Cardiac septum (tissue), 1 donor: ENCODE measurements at regions of chr3 and their contacts with region 1.

Region 1: GRCh38 chr3:194070634-194071409 is 65.1 kb upstream of the HES1 start:
- DNase-seq: peak; percentile 93

Region 2: DNA sequence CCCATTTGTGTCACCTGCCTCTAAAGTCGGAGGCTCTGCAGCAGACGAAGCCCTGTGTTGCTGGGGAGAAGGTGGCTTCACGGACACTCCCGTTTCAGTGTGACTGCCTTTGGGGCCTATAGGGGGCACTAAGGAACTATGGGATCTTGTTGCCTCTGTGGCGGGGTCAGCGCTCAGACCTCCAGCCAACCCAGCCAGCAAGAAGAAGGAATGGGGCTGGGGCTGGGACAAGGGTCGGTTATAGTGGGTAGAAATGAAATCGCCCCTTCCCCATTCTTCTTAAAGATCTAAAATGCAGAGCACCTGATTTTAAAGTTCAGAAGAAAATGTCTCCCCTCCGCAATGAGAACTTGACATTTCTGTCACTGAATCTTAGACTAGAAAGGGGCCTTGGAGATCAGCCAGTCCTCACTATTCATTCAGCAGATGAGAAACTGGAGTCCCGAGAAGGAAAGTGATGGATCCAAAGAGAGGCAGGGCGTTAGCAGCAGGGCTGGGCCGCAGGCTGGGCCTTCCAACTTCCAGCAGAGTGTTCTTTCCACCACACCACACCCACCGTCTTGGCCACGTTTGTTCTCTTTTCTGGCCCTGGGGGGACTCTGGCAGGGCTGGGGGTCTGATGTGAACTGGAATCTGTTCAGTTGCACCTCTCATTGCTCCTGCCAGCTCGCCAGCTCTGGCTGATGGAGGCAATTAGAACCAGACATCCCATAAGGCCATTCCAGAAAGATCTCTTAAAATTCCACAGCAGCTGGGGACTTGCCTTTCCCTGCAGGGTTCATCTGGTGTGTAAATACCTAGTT is 282.4 kb before region 1 on chr3:
- intact Hi-C with region 1: loop called (anchors 5 kb)
- DNase-seq: no peak

Region 3: GRCh38 chr3:194003125-194004057 is 67.4 kb before region 1 on chr3:
- intact Hi-C with region 1: loop called (anchors 1 kb)
- DNase-seq: peak; percentile 94

Region 4: DNA sequence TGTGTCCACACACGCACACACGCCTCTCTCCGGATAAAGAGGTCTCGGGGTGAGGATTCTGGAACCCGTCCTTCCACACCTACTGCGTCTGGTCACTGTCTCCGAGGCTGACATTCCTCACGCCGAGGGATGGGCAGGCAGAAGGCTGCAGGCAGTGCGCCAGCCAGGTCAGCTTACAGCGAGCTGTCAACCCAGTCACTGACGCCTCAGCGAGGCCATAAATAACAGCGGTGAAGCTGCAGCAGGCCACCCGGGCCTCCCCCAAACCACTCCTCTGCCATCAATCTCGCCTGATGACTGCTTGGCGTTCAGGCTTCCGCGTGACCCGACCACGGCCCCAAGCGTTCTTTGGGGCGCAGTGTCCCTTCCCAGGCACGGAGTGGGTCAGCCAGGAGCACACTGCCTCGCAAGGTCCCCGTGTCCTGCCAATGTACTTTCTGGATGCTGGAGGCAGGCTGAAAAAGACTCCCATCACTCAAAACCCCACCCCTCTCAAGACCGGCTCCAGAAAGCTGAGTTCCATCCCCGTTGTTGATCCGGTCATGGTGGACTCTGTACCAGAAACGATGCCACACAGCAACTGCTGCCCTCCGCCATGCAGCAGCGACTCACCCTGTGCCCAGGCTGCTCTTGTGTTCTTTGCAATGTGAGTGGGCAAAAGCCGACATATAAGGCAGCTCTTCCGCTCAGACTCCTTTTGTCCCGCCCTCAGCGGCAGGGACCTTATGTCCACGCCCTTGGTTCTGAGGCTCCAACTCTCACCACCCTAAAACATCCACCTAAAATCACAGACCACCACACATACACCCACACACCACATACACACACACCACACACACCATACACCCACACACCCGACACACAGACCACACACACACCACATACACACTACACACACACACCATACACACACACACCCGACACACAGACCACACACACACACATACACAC is 253.2 kb after region 1 on chr3:
- intact Hi-C with region 1: loop called (anchors 2 kb)
- DNase-seq: peak; percentile 94